Heart left ventricle (tissue), 16 donors: ENCODE measurements at regions of chr11 and their contacts with region 1.

Region 1: DNA sequence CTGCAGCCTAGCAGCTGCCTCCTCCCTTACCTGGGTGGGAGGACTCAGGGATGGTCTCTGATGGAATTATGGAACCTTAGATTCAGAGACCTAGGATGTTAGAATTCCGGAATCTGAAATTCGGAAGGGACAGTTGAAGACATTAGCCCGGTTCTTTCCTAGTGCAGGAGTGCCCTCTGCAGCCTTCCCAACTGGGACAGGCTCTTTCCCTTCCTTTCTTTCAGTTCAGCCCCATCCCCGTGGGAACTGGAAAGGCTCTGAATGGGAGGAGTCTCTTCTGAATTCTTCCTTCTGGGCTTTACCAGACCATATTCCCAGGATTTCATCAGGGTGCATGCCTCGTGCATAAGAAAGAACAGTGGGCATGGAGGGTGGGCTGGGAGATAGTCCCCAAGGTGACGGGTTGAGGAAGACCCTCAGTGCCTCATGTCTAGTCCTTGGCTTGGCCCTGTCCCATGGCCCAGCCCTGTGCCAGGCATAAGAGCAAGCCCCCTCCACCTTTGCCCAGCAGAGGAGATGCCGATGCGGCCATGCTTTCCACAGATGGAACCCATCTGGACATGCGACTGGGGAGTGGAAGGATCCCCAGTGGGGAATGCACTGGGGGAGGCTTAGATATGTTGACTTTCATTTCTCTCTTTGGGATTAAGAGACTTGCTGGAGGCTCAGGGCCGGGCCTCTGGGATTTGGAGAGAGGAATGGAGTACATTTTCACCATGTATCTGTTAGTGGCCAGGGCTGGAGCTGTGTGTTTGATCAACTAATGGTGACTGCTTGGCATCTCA is 14.4 kb downstream of the DNAJB13 start:
- DNase-seq: no peak
- ATAC-seq: peak in 1 of 4 donors; percentile 17
- H3K4me3 ChIP-seq: no peak overlapping the region
- H3K27ac ChIP-seq: no peak overlapping the region
- H3K4me1 ChIP-seq: peaks cover 0 to 12% (median 3%) of the 10 kb centered on the region in 12 donors
- H3K27me3 ChIP-seq: no peaks in the 10 kb centered on the region
- CTCF ChIP-seq: no peak
- POLR2A ChIP-seq: no peak

Region 2: GRCh38 chr11:73838443-73839122 is 126.7 kb before region 1 on chr11:
- intact Hi-C with region 1: no loop called
- DNase-seq: no peak
- ATAC-seq: peak in 3 of 4 donors; percentile 42 to 63 (median 53)
- H3K4me3 ChIP-seq: no peak overlapping the region
- H3K27ac ChIP-seq: peak overlapping the region in 2 of 12 donors; percentile 17
- H3K4me1 ChIP-seq: peaks cover 0 to 11% (median 0%) of the 10 kb centered on the region in 12 donors
- H3K27me3 ChIP-seq: no peaks in the 10 kb centered on the region
- CTCF ChIP-seq: no peak
- POLR2A ChIP-seq: no peak

Region 3: DNA sequence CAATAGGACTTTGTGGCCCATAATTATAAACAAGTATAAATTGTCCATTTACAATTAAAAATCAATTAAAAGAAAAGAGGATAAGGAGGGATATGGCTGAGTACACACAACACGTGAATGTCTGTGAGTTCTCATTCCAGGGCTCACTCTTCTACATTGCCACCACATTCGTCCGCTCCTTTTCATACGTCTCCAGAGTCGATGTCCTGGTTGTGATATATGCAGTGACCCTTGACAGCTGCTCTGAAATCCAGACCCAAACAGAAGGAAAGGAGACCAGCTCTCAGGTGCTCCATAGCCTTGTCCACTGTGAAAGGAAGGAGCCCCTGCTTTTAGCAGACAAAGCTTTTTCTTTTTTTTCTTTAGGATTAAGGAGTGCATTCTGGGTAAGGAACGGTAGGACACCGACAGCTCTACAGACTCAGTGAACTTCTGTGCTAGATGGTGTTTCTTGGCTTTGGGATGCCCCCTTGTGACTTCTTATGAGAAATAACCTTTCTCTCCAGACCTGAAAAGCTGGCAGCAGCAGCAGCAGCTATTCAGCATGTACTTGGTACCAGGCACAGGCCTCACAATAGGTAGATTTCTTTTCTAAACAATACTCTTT is 34.1 kb before region 1 on chr11:
- intact Hi-C with region 1: no loop called
- DNase-seq: peak in 1 of 5 donors; percentile 29
- ATAC-seq: peak in 3 of 4 donors; percentile 38 to 63 (median 57)
- H3K4me3 ChIP-seq: no peak overlapping the region
- H3K27ac ChIP-seq: no peak overlapping the region
- H3K4me1 ChIP-seq: no peaks in the 10 kb centered on the region
- H3K27me3 ChIP-seq: no peaks in the 10 kb centered on the region
- CTCF ChIP-seq: peak in 7 of 12 donors; percentile 13 to 26 (median 22)
- POLR2A ChIP-seq: no peak

Region 4: DNA sequence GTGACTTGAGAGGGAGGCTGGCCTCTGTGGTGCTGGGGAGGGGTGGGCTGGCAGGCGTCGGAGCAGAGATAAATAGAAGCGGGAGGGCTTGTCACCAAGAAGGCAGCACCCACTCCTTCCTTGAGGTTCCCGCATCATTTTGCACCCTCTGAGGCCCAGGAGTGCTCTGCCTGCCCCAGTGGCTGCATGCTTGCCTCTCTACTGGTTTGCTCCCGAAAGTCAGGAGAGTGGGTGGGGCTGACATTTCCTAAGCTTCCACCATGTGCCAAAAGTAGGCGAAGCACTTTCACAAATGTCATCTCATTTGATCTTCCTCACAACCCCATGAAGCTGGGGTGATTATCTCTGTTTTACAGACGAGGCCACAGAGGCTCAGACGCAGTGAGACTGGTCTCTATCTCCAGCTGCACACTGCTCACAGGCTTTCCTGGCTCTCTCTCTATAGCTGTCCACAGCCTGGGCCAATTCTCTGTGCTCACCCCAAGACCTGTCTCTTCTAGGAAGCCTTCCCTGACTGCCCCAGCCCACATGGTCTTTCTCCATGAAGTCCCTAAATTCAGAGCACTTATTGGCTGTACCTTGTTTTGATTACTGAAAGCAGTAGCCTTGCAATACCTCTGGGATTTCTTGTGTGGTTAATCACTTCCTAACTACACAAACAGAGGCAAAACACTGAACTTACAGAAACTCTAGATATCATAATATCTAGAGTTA is 46.2 kb after region 1 on chr11:
- intact Hi-C with region 1: loop called in 2 of 10 experiments (anchors 5 to 10 kb)
- DNase-seq: no peak
- ATAC-seq: peak in 3 of 4 donors; percentile 21 to 53 (median 43)
- H3K4me3 ChIP-seq: no peak overlapping the region
- H3K27ac ChIP-seq: peak overlapping the region in 2 of 12 donors; percentile 29 to 34
- H3K4me1 ChIP-seq: peaks cover 0 to 61% (median 14%) of the 10 kb centered on the region in 12 donors
- H3K27me3 ChIP-seq: no peaks in the 10 kb centered on the region
- CTCF ChIP-seq: no peak
- POLR2A ChIP-seq: no peak

Region 5: DNA sequence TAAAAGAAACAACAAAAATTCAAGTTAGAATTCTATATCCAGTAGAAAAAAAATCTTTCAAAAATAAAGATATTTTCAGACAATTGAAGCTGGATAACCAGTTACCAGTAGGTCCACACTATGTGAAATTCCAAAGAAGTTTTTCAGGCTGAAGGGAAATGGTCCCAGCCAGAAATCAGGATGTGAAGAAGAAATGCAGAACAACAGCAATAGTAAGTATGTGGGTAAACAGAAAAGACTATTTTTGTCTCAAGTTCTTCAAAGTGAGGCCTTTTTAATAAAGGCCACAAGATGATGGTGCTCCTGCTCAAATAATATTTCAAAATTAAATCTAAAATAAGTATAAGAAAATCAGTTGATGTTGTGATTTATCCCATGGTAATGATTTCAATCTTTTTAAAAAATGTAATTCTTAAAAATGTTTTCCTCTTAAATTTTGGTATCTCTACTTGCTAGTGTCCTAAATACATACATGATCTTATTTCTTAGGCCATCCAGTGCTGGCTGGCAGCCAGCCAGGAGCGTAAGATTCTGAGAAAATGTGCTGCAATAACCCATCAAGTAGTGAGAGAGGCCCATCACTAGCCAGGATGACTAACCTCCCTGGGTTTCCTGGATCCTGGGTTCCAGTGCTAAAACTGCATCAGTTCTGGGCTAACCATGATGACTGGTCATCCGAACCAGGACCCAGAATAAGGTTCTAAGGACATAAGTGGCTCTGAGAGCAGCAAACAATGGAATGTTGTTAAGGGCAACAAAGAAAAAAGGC is 59.2 kb after region 1 on chr11:
- intact Hi-C with region 1: loop called in 4 of 10 experiments (anchors 2 to 10 kb)
- DNase-seq: peak in 2 of 5 donors; percentile 62 to 65
- ATAC-seq: peak in 1 of 4 donors; percentile 44
- H3K4me3 ChIP-seq: no peak overlapping the region
- H3K27ac ChIP-seq: peak overlapping the region in 1 of 12 donors; percentile 97
- H3K4me1 ChIP-seq: peaks cover 0 to 75% (median 7%) of the 10 kb centered on the region in 12 donors
- H3K27me3 ChIP-seq: no peaks in the 10 kb centered on the region
- CTCF ChIP-seq: no peak
- POLR2A ChIP-seq: no peak

Region 6: GRCh38 chr11:74085542-74085892 is 120.2 kb after region 1 on chr11:
- intact Hi-C with region 1: loop called in 2 of 10 experiments (anchors 10 kb)
- DNase-seq: peak in 1 of 5 donors; percentile 20
- ATAC-seq: peak in 1 of 4 donors; percentile 28
- H3K4me3 ChIP-seq: no peak overlapping the region
- H3K27ac ChIP-seq: peak overlapping the region in 1 of 12 donors; percentile 43
- H3K4me1 ChIP-seq: peaks cover 0 to 7% (median 0%) of the 10 kb centered on the region in 12 donors
- H3K27me3 ChIP-seq: no peaks in the 10 kb centered on the region
- CTCF ChIP-seq: no peak
- POLR2A ChIP-seq: no peak

Region 7: DNA sequence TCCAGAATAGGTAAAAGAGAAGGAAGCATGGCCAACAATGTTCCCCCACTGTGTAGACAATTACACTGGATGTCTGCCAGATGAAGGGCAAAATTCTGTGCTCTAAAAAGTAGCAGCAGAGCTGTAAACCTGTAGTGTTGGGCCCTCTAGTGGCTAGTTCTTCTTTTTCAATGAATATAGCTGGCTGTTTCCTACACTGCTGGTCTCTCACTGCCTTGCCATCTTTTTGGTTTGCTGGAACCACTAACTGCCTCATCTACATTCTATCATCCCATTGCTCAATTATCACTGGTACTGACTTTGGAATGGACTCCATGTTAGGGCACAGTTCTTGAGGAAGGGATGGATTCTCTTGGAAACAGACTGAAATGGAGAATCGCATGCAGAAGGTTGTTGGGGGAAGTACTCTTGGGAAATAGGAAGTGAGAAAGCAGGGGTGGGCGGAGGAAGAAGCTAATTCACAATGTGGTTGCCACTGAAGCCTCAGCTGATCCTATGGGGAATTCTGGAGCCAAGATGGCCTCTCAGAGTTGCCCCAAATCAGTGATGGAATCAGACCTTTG is 484.2 kb after region 1 on chr11:
- intact Hi-C with region 1: loop called in 4 of 10 experiments (anchors 5 to 10 kb)
- DNase-seq: peak in 2 of 5 donors; percentile 53 to 70
- ATAC-seq: peak; percentile 82 to 89 (median 87)
- H3K4me3 ChIP-seq: no peak overlapping the region
- H3K27ac ChIP-seq: no peak overlapping the region
- H3K4me1 ChIP-seq: peaks cover 0 to 6% (median 0%) of the 10 kb centered on the region in 12 donors
- H3K27me3 ChIP-seq: peaks cover 0 to 6% (median 0%) of the 10 kb centered on the region in 9 donors
- CTCF ChIP-seq: peak; percentile 48 to 83 (median 77)
- POLR2A ChIP-seq: no peak